A673 (cell line): ENCODE measurements at regions of chr2 and their contacts with region 1.

Region 1: DNA sequence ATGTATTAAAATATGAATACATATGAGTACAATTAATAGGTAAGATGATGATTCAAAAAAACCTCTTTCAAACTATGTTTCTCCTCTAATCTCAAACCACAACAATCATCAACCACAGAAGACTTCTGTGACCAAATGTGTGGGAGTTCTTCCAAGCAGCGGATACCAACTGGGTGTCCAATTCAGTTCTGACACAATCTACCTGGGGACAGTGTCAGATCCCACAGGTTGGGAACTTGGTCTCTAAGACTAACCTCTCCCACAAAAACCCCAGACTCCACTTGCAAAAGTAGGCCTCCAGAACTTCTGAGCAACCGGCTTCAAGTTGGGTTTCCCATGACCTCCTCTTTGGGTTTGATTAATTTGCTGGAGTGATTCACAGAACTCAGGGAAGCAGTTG is 26.9 kb downstream of the FASTKD1 start:
- DNase-seq: no peak
- H3K4me3 ChIP-seq: no peak overlapping the region
- H3K27ac ChIP-seq: no peak overlapping the region
- H3K4me1 ChIP-seq: no peaks in the 10 kb centered on the region
- H3K27me3 ChIP-seq: no peaks in the 10 kb centered on the region
- CTCF ChIP-seq: no peak

Region 2: DNA sequence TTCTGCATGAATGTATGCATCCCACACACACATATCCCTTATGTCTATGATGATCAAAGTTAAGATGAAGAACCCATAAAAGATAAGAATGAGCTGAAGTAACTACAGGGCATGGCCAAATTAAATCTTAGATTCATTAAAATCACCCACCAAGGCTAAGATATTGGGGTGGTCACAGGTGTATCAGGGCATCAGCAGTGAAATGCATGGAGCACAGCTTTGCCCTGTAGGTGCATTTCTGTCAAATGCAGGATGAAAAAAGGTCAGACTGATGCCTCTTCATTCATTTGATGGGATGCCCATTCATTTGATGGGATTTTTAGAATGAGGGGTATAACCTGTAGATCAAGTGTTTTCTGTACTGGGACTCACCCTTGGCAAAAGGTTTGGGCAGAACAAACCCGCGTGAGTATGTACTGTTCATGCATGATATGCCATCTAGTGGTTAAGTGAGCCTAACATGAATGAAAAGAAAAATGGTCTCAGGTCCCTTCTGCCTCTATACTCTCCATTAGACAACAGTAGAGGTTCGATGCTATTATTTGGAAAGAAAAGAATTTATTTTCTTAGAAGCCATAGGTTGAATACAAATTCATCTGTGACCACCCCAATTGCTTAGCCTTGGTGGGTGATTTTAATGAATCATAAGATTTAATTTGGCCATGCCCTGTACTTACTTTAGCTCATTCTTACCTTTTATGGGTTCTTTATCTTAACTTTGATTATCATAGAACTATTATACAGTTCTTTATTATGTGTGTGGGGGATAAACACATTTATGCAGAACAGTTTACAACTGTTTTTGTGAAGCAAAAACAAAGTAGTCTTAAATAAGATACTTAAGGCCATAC is 787.6 kb before region 1 on chr2:
- CTCF ChIA-PET with region 1: no interaction called
- POLR2A ChIA-PET with region 1: no interaction called
- intact Hi-C with region 1: no loop called
- DNase-seq: peak; percentile 66
- H3K4me3 ChIP-seq: no peak overlapping the region
- H3K27ac ChIP-seq: no peak overlapping the region
- H3K4me1 ChIP-seq: no peaks in the 10 kb centered on the region
- H3K27me3 ChIP-seq: no peaks in the 10 kb centered on the region
- CTCF ChIP-seq: peak; percentile 64

Region 3: GRCh38 chr2:169702996-169703395 is 156.2 kb after region 1 on chr2:
- CTCF ChIA-PET with region 1: interaction called, 10 read pairs
- POLR2A ChIA-PET with region 1: no interaction called
- intact Hi-C with region 1: no loop called
- DNase-seq: no peak
- H3K4me3 ChIP-seq: no peak overlapping the region
- H3K27ac ChIP-seq: no peak overlapping the region
- H3K4me1 ChIP-seq: no peaks in the 10 kb centered on the region
- H3K27me3 ChIP-seq: no peaks in the 10 kb centered on the region
- CTCF ChIP-seq: no peak